Heart left ventricle (tissue), 16 donors: ENCODE measurements at regions of chr1 and their contacts with region 1.

Region 1: DNA sequence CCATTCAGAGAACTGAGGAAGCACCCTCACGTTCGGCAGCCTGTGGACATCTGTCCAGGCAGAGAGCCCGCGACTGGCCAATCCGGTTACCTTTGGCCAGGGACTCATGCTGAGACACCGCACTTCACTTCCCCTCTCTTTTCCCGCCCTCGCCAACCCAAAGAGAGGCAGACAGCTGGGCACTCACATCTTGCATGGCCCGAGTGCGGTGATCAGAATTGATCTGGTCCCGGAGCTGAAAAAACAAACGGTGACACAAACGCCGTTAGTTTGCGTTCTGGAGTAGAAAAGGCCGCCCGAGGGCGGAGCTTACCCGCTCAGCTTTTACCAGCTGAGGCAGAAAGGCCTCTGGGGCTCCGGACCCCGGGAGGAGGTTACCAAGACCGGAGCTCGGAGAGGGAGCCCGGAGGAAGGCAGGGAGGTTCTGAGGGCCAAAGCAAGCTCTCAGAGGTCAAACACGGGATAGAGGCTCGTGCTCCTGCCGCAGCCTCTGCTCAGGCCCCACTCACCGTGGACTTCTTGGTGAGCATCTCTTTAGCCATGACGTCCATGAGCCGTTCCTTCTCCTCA is 376 bp downstream of the SF3A3 start:
- DNase-seq: peak in 2 of 5 donors; percentile 42 to 64
- ATAC-seq: peak; percentile 8 to 50 (median 42)
- H3K4me3 ChIP-seq: peak overlapping the region; percentile 66 to 98 (median 76)
- H3K27ac ChIP-seq: peak overlapping the region; percentile 27 to 92 (median 79)
- H3K4me1 ChIP-seq: peaks cover 0 to 25% (median 14%) of the 10 kb centered on the region in 12 donors
- H3K27me3 ChIP-seq: no peaks in the 10 kb centered on the region
- CTCF ChIP-seq: no peak
- POLR2A ChIP-seq: no peak

Region 2: DNA sequence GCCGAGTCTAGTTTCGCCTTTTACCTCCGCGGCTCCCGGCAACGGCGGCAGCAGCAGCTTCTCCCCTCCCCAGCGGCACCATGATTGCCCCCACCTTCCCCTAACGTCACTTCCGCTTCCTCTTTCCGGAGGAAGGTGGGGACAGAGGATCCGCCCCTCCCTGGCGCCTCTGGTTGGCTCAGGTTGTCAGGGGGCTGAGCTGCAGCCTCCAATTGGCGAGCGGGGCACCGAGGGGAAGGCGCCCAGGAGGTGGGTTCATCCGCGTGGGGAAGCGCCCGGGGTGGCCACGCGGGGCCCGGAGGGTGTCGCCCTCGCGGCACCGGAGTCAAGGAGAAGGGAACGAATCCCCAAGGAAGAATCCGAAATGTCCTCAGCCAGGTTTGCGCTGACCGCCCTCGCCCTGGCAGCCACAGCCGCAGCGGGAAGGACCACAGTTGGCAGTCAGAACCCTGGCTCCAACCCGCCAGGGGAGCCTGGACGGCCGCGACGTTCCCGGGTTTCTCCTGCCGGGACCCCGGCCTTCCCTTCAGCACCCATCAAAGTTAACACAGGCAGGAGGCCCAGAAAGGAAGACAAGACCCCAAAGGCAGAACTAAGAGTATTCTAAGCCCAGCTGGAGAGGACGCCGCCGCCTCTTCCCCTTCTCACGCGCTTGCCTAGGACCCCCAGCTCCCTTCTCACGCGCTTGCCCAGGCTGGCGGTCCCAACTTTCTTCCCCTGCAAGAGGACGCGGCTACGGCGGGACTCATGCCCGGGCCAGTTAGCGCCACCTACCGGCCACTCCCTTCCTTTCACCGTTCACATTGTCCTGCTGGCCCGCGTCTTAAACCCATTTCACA is 129.7 kb before region 1 on chr1 and contains the start of gene MTF1:
- intact Hi-C with region 1: loop called in 1 of 10 experiments (anchors 10 kb)
- DNase-seq: peak; percentile 98 to 99 (median 98)
- ATAC-seq: peak; percentile 99
- H3K4me3 ChIP-seq: peak within 1 kb of the TSS; percentile 60 to 98 (median 86)
- H3K27ac ChIP-seq: peak within 1 kb of the TSS; percentile 22 to 97 (median 93)
- H3K4me1 ChIP-seq: peaks cover 0 to 47% (median 32%) of the 10 kb centered on the region in 12 donors
- H3K27me3 ChIP-seq: no peaks in the 10 kb centered on the region
- CTCF ChIP-seq: peak; percentile 85 to 97 (median 92)
- POLR2A ChIP-seq: peak in 1 of 2 donors; percentile 87
- total RNA-seq, gene MTF1: 4.2 to 19.5 (median 12.4) TPM

Region 3: GRCh38 chr1:37946703-37947360 is 42.6 kb before region 1 on chr1 and contains the start of gene INPP5B:
- intact Hi-C with region 1: loop called in 2 of 10 experiments (anchors 5 kb)
- DNase-seq: peak; percentile 90 to 94 (median 92)
- ATAC-seq: peak; percentile 95 to 97 (median 96)
- H3K4me3 ChIP-seq: peak within 1 kb of the TSS; percentile 50 to 94 (median 81)
- H3K27ac ChIP-seq: peak within 1 kb of the TSS; percentile 13 to 95 (median 89)
- H3K4me1 ChIP-seq: peaks cover 0 to 30% (median 16%) of the 10 kb centered on the region in 12 donors
- H3K27me3 ChIP-seq: no peaks in the 10 kb centered on the region
- CTCF ChIP-seq: peak in 4 of 12 donors; percentile 9 to 36 (median 22)
- POLR2A ChIP-seq: peak in 1 of 2 donors; percentile 53
- total RNA-seq, gene INPP5B: 7.7 to 16.2 (median 13.1) TPM

Region 4: GRCh38 chr1:38018864-38019343 is 29.5 kb after region 1 on chr1:
- intact Hi-C with region 1: loop called in 5 of 10 experiments (anchors 1 to 2 kb)
- DNase-seq: no peak
- ATAC-seq: no peak
- H3K4me3 ChIP-seq: no peak overlapping the region
- H3K27ac ChIP-seq: peak overlapping the region in 1 of 12 donors; percentile 95
- H3K4me1 ChIP-seq: peaks cover 4 to 43% (median 33%) of the 10 kb centered on the region in 12 donors
- H3K27me3 ChIP-seq: no peaks in the 10 kb centered on the region
- CTCF ChIP-seq: peak; percentile 24 to 66 (median 54)
- POLR2A ChIP-seq: no peak

Region 5: GRCh38 chr1:38129473-38129872 is 140.0 kb after region 1 on chr1:
- intact Hi-C with region 1: no loop called
- DNase-seq: no peak
- ATAC-seq: no peak
- H3K4me3 ChIP-seq: no peak overlapping the region
- H3K27ac ChIP-seq: no peak overlapping the region
- H3K4me1 ChIP-seq: peaks cover 0 to 13% (median 0%) of the 10 kb centered on the region in 12 donors
- H3K27me3 ChIP-seq: peaks cover 2 to 16% (median 10%) of the 10 kb centered on the region in 9 donors
- CTCF ChIP-seq: peak in 1 of 12 donors; percentile 11
- POLR2A ChIP-seq: no peak

Region 6: DNA sequence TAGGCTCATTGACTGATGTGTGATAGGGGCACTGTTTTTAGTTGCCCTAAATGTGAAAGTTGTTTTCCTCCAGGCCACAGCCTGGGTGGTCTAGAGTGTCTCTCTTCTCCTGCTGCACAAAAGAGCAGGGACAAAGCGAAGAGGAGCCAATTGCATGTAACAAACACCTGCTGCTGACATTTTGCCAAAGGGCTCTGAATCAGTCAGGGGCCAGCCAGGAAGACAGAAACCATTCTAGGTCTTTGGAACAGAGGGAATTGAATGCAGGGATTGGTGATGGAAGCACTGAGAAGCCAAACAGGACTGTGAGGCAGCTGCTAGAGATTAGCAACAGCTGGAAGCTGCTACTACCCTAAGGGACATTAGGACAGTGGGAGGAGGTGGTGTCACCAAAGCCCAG is 242.5 kb after region 1 on chr1:
- intact Hi-C with region 1: no loop called
- DNase-seq: no peak
- ATAC-seq: no peak
- H3K4me3 ChIP-seq: no peak overlapping the region
- H3K27ac ChIP-seq: no peak overlapping the region
- H3K4me1 ChIP-seq: no peaks in the 10 kb centered on the region
- H3K27me3 ChIP-seq: peaks cover 0 to 9% (median 0%) of the 10 kb centered on the region in 9 donors
- CTCF ChIP-seq: no peak
- POLR2A ChIP-seq: no peak

Region 7: GRCh38 chr1:38834937-38835827 is 845.7 kb after region 1 on chr1:
- intact Hi-C with region 1: loop called in 2 of 10 experiments (anchors 1 to 10 kb)
- DNase-seq: peak in 1 of 5 donors; percentile 55
- ATAC-seq: peak; percentile 60 to 88 (median 80)
- H3K4me3 ChIP-seq: no peak overlapping the region
- H3K27ac ChIP-seq: no peak overlapping the region
- H3K4me1 ChIP-seq: peaks cover 0 to 18% (median 9%) of the 10 kb centered on the region in 12 donors
- H3K27me3 ChIP-seq: peaks cover 0 to 21% (median 0%) of the 10 kb centered on the region in 9 donors
- CTCF ChIP-seq: peak; percentile 64 to 86 (median 80)
- POLR2A ChIP-seq: no peak